MCF 10A (cell line): ENCODE measurements at regions of chr14 and their contacts with region 1.

Region 1: GRCh38 chr14:54253195-54253947 is 143.4 kb upstream of the CDKN3 start:
- DNase-seq: peak; percentile 92
- H3K4me3 Mint-ChIP-seq: no peak overlapping the region
- H3K27ac Mint-ChIP-seq: peak overlapping the region; percentile 92
- H3K4me1 Mint-ChIP-seq: peaks cover 45% of the 10 kb centered on the region
- H3K27me3 Mint-ChIP-seq: no peaks in the 10 kb centered on the region
- CTCF ChIP-seq: no peak

Region 2: DNA sequence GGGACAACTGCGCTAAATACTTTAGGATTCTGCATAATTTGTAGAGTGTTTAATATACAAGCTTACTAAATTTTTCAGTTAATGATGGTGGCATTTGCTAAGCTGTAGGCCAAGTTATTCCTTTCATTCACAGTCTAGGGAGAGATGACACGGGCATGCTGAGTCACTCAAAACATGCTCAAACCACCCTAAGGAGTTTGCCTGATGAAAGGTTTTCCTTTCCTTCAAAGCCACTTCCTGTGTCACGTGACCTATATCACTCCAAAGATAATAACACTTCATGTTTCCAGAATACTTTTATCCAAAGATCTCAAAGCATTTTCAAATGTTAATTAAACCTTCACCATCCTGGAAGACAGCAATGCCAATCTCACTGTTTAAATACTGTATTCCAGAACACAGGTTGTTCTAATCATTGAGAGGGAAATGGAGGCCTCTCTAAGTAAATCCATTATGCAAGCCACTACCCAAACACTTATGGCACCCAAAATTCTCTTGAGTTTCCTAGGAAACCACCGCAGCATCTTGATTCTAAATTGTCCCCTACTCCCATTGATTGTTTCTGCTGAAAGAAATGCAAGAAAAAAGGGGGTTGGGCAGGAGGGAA is 63.5 kb before region 1 on chr14:
- CTCF ChIA-PET with region 1: no interaction called
- POLR2A ChIA-PET with region 1: interaction called, 4 read pairs
- intact Hi-C with region 1: loop called (anchors 10 kb)
- DNase-seq: peak; percentile 85
- H3K4me3 Mint-ChIP-seq: no peak overlapping the region
- H3K27ac Mint-ChIP-seq: peak overlapping the region; percentile 64
- H3K4me1 Mint-ChIP-seq: peaks cover 32% of the 10 kb centered on the region
- H3K27me3 Mint-ChIP-seq: no peaks in the 10 kb centered on the region
- CTCF ChIP-seq: no peak

Region 3: DNA sequence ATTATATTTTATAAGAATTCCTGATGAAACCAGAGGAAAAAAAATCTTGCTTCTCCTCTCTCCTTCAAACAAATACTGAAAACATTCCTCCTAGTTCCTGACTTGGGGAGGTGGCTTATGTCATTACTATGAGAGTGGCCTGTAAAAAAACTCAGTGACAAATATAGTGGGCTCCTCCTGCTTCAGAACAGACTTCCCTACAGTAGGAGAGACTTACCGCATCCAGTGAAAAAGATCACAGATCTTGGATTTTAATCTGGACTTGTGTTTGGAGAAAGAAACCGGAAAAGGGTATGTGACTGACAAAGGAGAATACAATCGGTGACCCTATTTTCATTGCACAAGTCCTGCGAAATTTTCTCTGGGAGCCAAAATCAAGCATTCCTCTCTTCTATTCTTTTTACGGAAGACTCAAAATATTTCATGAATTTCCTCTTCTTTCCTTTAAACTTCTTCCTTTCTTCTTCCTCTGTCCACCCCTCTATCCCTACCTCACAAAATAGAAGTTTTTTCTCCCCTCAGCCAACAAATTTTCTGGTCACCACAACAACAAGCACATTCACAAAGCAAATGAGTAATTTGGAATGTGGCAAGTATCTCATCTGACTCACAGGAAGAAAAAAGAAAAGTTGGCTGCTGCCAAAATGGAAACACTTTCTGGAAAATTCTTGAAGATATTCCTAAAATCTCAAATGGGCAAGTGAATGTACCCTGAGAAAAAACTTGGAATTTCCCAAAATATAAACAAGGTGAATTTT is 41.6 kb before region 1 on chr14:
- CTCF ChIA-PET with region 1: no interaction called
- POLR2A ChIA-PET with region 1: interaction called, 7 read pairs
- intact Hi-C with region 1: loop called (anchors 1 kb)
- DNase-seq: peak; percentile 82
- H3K4me3 Mint-ChIP-seq: peak overlapping the region; percentile 41
- H3K27ac Mint-ChIP-seq: peak overlapping the region; percentile 92
- H3K4me1 Mint-ChIP-seq: peaks cover 38% of the 10 kb centered on the region
- H3K27me3 Mint-ChIP-seq: no peaks in the 10 kb centered on the region
- CTCF ChIP-seq: no peak

Region 4: GRCh38 chr14:54312140-54312801 is 58.9 kb after region 1 on chr14:
- CTCF ChIA-PET with region 1: interaction called, 6 read pairs
- POLR2A ChIA-PET with region 1: interaction called, 11 read pairs
- intact Hi-C with region 1: loop called (anchors 1 kb)
- DNase-seq: peak; percentile 99
- H3K4me3 Mint-ChIP-seq: peak overlapping the region; percentile 9
- H3K27ac Mint-ChIP-seq: peak overlapping the region; percentile 95
- H3K4me1 Mint-ChIP-seq: peaks cover 42% of the 10 kb centered on the region
- H3K27me3 Mint-ChIP-seq: no peaks in the 10 kb centered on the region
- CTCF ChIP-seq: no peak

Region 5: GRCh38 chr14:54356172-54356571 is 102.8 kb after region 1 on chr14:
- CTCF ChIA-PET with region 1: no interaction called
- POLR2A ChIA-PET with region 1: no interaction called
- intact Hi-C with region 1: no loop called
- DNase-seq: peak; percentile 66
- H3K4me3 Mint-ChIP-seq: no peak overlapping the region
- H3K27ac Mint-ChIP-seq: no peak overlapping the region
- H3K4me1 Mint-ChIP-seq: peaks cover 6% of the 10 kb centered on the region
- H3K27me3 Mint-ChIP-seq: peaks cover 10% of the 10 kb centered on the region
- CTCF ChIP-seq: no peak